Motor neuron (in vitro differentiated cells): ENCODE measurements at regions of chr19 and their contacts with region 1.

Region 1: DNA sequence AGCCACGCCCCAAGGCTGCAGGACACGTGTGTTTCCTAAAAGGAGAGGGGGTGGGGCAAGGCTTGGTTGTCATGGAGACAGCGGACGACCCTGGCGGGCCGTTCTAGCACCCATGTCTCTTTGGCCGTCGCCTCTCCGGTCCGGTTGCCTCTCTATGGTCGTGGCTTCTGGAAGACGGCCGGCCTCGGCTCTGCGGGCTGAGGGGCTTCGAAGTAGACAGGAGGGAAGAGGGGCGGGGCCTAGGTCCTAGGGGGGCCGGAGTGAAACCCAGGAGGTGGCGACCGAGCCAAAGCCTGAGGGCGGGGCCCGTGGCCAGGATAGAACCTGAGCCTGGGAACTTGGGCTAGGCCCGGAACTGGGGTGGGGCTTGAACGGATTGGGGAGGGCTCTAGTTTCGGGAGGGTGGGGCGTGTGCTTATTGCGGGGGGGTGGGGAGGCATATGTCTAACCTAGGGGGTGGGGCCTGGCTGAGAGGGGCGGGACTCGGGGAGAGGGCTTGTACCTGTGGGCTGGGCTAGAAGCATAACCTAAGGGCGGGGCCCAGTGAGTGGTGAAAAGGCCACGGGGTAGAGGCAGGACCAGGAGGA is 750 bp upstream of the SLC27A1 start:
- ATAC-seq: peak; percentile 47 to 68 (median 55)
- H3K4me3 ChIP-seq: peak overlapping the region; percentile 57 to 89 (median 73)
- H3K27ac ChIP-seq: peak overlapping the region; percentile 72 to 80
- H3K4me1 ChIP-seq: peaks cover 11 to 16% of the 10 kb centered on the region in 2 donors

Region 2: DNA sequence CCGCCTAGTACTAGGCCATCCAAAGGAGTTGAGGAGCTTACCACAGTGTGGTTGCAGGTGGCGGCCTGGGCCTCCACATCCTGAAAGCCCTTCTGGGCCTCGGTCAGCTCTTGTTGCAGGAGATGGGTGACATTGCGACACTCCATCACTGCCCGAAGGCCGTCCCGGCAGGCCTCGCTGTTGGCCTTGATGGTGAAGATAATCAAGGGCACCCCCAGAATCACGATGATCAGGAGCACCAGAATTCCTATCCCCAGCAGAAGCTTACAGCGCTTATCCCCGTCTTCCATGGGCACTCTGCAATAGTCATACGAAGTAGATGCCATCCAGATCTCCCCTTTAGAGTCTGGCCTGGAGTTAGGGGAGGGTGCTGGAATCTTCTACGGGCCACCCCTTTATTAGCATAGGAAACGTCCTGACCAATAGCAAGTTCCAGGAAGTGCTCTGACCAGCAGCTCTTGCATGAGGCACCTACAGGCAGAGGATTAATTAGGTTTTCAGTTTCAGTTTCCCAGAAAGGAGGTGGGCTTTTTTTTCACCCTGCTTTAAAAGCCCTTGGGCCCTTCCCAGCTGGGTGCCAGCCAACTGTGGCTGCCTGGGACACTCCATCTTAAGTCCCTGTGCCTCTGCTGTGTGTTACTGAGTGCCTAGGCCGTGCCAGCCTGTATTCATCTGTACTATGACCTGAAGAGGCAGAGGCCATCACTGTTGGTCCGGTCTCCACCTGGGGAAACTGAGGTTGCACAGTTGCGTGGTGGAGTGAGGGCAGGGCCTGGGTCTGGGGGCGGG is 64.1 kb before region 1 on chr19 and contains the start of gene BST2:
- in situ Hi-C with region 1: loop called in 1 of 9 experiments (anchors 10 kb)
- ATAC-seq: peak; percentile 21 to 98 (median 39)
- H3K4me3 ChIP-seq: peak within 1 kb of the TSS in 2 of 5 donors; percentile 41 to 43
- H3K27ac ChIP-seq: peak within 1 kb of the TSS in 1 of 2 donors; percentile 74
- H3K4me1 ChIP-seq: peaks cover 35 to 37% of the 10 kb centered on the region in 2 donors
- total RNA-seq, gene BST2: 6.8 to 217 (median 31.0) TPM